ENCODE measurements at regions of chr15 and their contacts with region 1.

Region 1: DNA sequence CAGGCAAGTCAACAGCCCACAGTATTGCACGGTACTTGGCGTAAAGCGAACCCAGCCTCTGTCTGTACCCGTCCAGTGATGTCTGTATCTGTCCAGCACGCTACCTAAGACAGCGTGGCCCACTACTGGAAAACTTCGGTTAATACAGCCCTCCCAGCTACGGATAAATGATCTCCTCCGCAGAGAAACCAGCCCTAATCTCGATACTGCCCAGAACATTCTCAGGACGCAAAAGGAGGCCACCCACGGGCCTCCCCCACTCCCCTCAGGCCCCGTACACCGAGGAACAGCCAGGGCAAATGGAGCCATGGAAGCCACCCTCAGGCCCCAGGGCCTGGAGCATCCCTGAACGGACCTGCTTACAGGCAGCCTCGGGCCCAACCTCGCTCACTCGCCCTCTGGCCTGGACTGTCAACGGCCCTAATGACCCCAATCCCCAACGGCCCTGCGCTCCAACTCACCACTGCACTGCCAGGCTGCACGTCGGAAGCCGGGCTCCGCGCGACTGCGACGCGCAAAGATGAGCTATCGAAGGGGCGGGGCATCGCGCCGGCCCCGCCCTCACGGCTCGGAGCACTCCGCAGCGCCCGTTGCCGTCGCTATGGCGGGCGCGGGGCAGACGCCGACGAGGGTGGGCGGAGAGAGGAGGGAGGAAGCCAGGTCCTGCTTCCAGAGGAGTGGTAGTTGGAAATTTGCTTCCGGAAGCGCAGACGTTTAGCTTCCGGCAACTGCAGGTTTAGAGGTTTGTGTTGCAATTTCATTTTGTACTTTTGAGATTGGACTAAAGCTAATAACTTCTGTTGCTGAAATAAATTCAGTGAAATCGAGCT is at the start of gene SKIC8:
- DNase-seq: peak; percentile 89 to 91 (median 89)
- H3K4me3 ChIP-seq: peak within 1 kb of the TSS; percentile 70 to 95
- H3K4me3 Mint-ChIP-seq: peak within 1 kb of the TSS; percentile 96 to 99 (median 97)
- H3K27ac ChIP-seq: peak within 1 kb of the TSS; percentile 73
- H3K27ac Mint-ChIP-seq: peak within 1 kb of the TSS; percentile 86 to 99 (median 97)
- H3K4me1 ChIP-seq: peaks cover 21% of the 10 kb centered on the region
- H3K4me1 Mint-ChIP-seq: peaks cover 13 to 31% (median 19%) of the 10 kb centered on the region in 4 donors
- H3K27me3 ChIP-seq: no peaks in the 10 kb centered on the region
- H3K27me3 Mint-ChIP-seq: no peaks in the 10 kb centered on the region
- total RNA-seq, gene SKIC8: 43.6 to 45.5 TPM

Region 2: GRCh38 chr15:78264304-78265136 is 34.8 kb before region 1 on chr15 and contains the start of gene DNAJA4:
- CTCF ChIA-PET with region 1: interaction called, 14 read pairs
- POLR2A ChIA-PET with region 1: interaction called, 47 read pairs
- intact Hi-C with region 1: no loop called
- DNase-seq: peak; percentile 67 to 76 (median 73)
- H3K4me3 ChIP-seq: peak within 1 kb of the TSS; percentile 55 to 58
- H3K4me3 Mint-ChIP-seq: peak within 1 kb of the TSS; percentile 88 to 94 (median 89)
- H3K27ac ChIP-seq: peak within 1 kb of the TSS; percentile 63
- H3K27ac Mint-ChIP-seq: peak within 1 kb of the TSS; percentile 87 to 96 (median 91)
- H3K4me1 ChIP-seq: peaks cover 22% of the 10 kb centered on the region
- H3K4me1 Mint-ChIP-seq: peaks cover 19 to 34% (median 22%) of the 10 kb centered on the region in 4 donors
- H3K27me3 ChIP-seq: no peaks in the 10 kb centered on the region
- H3K27me3 Mint-ChIP-seq: no peaks in the 10 kb centered on the region
- total RNA-seq, gene DNAJA4: 31.5 to 32.8 TPM